H1 (cell line): ENCODE measurements at regions of chr15 and their contacts with region 1.

Region 1: DNA sequence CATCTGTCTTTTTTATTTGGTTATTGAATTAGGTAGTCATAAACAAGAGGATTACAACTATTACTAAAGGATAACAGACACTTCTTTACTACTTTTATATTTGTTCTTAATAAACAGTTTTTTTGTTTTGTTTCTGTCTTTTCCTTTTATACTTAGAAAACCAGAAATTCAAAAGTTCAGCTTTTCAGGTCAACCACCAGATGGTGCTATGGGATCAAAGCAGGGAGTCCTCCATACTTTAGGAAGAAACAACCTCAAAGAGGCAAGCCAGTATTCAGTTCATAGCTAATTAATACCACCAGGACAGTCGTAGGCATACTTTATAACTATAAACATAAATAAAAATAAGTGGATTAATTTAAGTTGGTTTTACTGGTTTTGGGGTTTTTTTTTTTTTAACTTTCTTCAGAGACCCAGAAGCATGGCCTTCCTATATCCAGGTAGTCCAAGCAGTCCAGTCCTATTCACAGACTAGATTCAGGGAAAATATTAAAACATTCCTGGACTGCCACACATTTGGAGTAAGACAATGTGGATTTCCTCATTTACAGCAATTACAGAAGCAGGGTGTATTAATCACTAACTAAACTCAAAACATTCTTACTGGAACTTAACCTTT is 16.0 kb upstream of the EID1 start:
- DNase-seq: no peak
- H3K4me3 ChIP-seq: no peak overlapping the region
- H3K27ac ChIP-seq: no peak overlapping the region
- H3K4me1 ChIP-seq: peaks cover 0 to 7% (median 1%) of the 10 kb centered on the region in 4 experiments; a peak in 3 of 7 replicates
- H3K27me3 ChIP-seq: no peaks in the 10 kb centered on the region; a peak in 1 of 7 replicates
- CTCF ChIP-seq: peak in 2 of 3 experiments; percentile 67 to 68; a peak in 3 of 4 replicates
- EP300 ChIP-seq: no peak
- POLR2A ChIP-seq: no peak
- RAD21 ChIP-seq: peak; percentile 92 to 96

Region 2: GRCh38 chr15:48582452-48583247 is 279.3 kb before region 1 on chr15:
- CTCF ChIA-PET with region 1: no interaction called
- POLR2A ChIA-PET with region 1: no interaction called
- DNase-seq: no peak
- H3K4me3 ChIP-seq: no peak overlapping the region
- H3K27ac ChIP-seq: no peak overlapping the region
- H3K4me1 ChIP-seq: no peaks in the 10 kb centered on the region
- H3K27me3 ChIP-seq: no peaks in the 10 kb centered on the region
- CTCF ChIP-seq: no peak
- EP300 ChIP-seq: no peak
- POLR2A ChIP-seq: no peak
- RAD21 ChIP-seq: no peak

Region 3: DNA sequence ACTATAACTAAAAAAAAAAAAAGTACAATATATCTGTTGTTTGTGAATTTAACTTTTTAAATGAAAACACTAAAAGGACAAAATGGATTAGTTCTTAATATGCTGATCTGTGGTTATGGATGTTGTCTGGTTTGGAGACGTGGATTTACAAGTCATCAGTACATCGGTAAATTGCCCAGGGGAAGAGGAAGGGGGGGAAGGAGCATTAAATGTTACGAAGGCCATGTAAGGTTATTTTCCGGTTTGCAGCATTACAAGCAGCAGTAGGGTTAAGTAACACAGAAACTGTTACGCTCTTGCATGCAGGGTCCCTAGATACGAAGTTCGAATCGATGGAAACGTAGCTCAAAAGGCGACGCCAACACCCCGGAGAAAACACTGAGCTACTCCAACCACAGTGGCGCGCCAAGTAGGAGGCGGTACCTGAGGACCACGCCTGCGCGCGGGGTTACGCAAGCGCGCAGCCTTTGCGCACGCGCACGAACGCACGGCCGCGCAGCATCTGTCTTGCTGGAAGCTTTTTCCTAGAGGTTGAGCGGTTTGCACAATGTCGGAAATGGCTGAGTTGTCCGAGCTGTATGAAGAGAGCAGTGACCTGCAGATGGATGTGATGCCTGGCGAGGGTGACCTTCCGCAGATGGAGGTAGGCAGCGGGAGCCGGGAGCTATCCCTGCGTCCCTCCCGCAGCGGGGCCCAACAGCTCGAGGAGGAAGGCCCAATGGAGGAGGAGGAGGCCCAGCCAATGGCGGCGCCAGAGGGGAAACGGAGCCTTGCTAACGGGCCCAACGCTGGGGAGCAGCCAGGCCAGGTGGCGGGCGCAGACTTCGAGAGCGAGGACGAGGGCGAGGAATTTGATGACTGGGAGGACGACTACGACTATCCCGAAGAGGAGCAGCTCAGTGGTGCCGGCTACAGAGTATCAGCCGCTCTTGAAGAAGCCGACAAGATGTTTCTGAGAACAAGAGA is 16.0 kb after region 1 on chr15 and contains the start of gene EID1:
- CTCF ChIA-PET with region 1: interaction called, 10 read pairs
- POLR2A ChIA-PET with region 1: interaction called, 3 read pairs
- DNase-seq: peak; percentile 76 to 91
- H3K4me3 ChIP-seq: peak within 1 kb of the TSS; percentile 74 to 93 (median 82)
- H3K27ac ChIP-seq: peak within 1 kb of the TSS; percentile 90
- H3K4me1 ChIP-seq: 0 out of 7 replicates have a peak, but pooled peaks cover 0 to 4% (median 0%) of the 10 kb centered on the region in 4 experiments
- H3K27me3 ChIP-seq: no peaks in the 10 kb centered on the region
- CTCF ChIP-seq: no peak
- EP300 ChIP-seq: no peak
- POLR2A ChIP-seq: peak; percentile 46 to 91
- RAD21 ChIP-seq: no peak
- total RNA-seq, gene EID1: 110 and 135 TPM in 2 replicates

Region 4: DNA sequence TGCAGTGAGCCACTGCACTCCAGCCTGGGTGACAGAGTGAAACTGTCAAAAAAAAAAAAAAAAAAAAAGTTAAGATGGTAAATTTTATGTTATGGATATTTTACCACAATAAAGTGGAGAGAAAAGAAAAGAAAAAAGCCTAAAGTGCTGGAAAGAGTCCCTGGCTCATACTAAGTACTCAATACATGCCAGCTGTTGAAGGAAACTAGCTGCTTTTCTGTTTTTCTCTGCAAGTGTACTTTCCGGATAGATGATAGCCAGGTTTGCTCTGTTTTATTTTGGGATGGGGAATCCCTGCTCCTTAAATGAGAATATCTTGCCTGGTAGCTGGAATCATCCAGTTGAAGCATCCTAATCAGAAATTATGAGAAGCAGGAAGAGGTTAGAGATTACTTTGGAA is 26.9 kb after region 1 on chr15:
- CTCF ChIA-PET with region 1: interaction called, 19 read pairs
- POLR2A ChIA-PET with region 1: no interaction called
- DNase-seq: no peak
- H3K4me3 ChIP-seq: no peak overlapping the region
- H3K27ac ChIP-seq: no peak overlapping the region
- H3K4me1 ChIP-seq: no peaks in the 10 kb centered on the region
- H3K27me3 ChIP-seq: no peaks in the 10 kb centered on the region
- CTCF ChIP-seq: no peak
- EP300 ChIP-seq: no peak
- POLR2A ChIP-seq: no peak
- RAD21 ChIP-seq: no peak

Region 5: GRCh38 chr15:48914717-48915116 is 52.8 kb after region 1 on chr15:
- CTCF ChIA-PET with region 1: interaction called, 19 read pairs
- POLR2A ChIA-PET with region 1: no interaction called
- DNase-seq: no peak
- H3K4me3 ChIP-seq: no peak overlapping the region
- H3K27ac ChIP-seq: no peak overlapping the region
- H3K4me1 ChIP-seq: no peaks in the 10 kb centered on the region
- H3K27me3 ChIP-seq: no peaks in the 10 kb centered on the region
- CTCF ChIP-seq: peak in 1 of 3 experiments; percentile 16; a peak in 1 of 4 replicates
- EP300 ChIP-seq: no peak
- POLR2A ChIP-seq: no peak
- RAD21 ChIP-seq: peak; percentile 5 to 14; a peak in 1 of 4 replicates

Region 6: GRCh38 chr15:48963524-48964113 is 101.7 kb after region 1 on chr15 and contains the start of gene SHC4:
- CTCF ChIA-PET with region 1: interaction called, 59 read pairs
- POLR2A ChIA-PET with region 1: no interaction called
- DNase-seq: no peak
- H3K4me3 ChIP-seq: peak within 1 kb of the TSS; percentile 50 to 79 (median 72)
- H3K27ac ChIP-seq: no peak within 1 kb of the TSS
- H3K4me1 ChIP-seq: peaks cover 0 to 12% (median 1%) of the 10 kb centered on the region in 4 experiments; a peak in 4 of 7 replicates
- H3K27me3 ChIP-seq: peaks cover 8 to 20% (median 17%) of the 10 kb centered on the region in 4 experiments
- CTCF ChIP-seq: no peak
- EP300 ChIP-seq: no peak
- POLR2A ChIP-seq: no peak
- RAD21 ChIP-seq: no peak
- total RNA-seq, gene SHC4: 0.30 and 0.54 TPM in 2 replicates

Region 7: DNA sequence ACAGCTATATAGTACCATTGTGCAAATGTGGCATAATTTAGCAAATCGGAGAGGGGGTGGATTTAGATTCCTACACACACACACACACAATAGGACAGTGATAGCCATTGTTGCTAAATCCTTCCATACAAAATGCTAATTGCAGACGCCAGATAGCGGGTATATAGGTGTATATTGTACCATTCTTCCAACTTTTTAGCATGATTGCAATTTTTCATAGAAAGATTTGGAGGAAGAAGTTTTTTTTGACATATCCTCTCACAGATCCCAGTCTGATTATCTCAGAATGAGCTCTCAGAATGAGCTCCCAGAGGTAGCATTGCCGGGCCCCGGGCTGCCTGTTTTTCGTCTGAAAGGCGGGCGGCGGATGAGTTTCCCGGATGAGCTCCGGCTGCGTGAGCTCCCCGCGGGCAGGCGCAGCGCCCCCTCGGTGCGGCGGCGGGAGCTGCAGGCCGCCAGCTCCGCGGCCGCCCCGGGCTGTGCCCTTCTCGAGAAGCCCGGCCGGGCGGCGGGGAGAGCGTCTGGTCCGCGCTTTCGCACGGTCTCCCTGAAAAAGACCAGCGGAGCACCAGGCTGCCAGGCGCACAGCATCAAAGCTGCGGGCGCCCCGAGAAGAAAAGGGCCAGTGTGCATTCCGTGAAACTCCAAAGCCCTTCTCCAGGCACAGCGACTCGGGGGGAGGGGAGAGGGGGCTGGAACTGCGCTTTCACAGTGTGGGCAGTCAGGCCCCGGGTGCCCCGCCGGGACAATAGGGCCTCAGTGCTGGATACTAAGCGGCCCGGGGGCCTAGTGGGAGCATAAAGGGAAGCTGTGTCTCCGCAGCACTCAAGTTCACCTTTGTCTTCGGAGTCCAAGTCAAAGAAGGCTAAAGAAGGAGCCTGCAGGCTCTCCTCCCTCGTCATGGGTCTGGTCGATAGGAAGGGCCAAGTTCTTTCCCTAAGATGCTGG is 113.8 kb after region 1 on chr15:
- CTCF ChIA-PET with region 1: interaction called, 23 read pairs
- POLR2A ChIA-PET with region 1: interaction called, 8 read pairs
- DNase-seq: peak; percentile 64 to 90
- H3K4me3 ChIP-seq: peak overlapping the region; percentile 35 to 61 (median 55)
- H3K27ac ChIP-seq: no peak overlapping the region
- H3K4me1 ChIP-seq: peaks cover 5 to 18% (median 8%) of the 10 kb centered on the region in 4 experiments
- H3K27me3 ChIP-seq: peaks cover 0 to 4% (median 0%) of the 10 kb centered on the region in 4 experiments; a peak in 1 of 7 replicates
- CTCF ChIP-seq: peak; percentile 80 to 83 (median 83)
- EP300 ChIP-seq: no peak
- POLR2A ChIP-seq: no peak
- RAD21 ChIP-seq: peak; percentile 37 to 71

Region 8: GRCh38 chr15:49145651-49146609 is 284.0 kb after region 1 on chr15:
- CTCF ChIA-PET with region 1: interaction called, 12 read pairs
- POLR2A ChIA-PET with region 1: interaction called, 3 read pairs
- DNase-seq: no peak
- H3K4me3 ChIP-seq: no peak overlapping the region
- H3K27ac ChIP-seq: no peak overlapping the region
- H3K4me1 ChIP-seq: peaks cover 0 to 3% (median 0%) of the 10 kb centered on the region in 4 experiments; a peak in 2 of 7 replicates
- H3K27me3 ChIP-seq: no peaks in the 10 kb centered on the region
- CTCF ChIP-seq: peak in 2 of 3 experiments; percentile 45 to 67; a peak in 2 of 4 replicates
- EP300 ChIP-seq: no peak
- POLR2A ChIP-seq: no peak
- RAD21 ChIP-seq: peak; percentile 48 to 51